Heart left ventricle (tissue), 16 donors: ENCODE measurements at regions of chr5 and their contacts with region 1.

Region 1: GRCh38 chr5:138975098-138975847 is 100.1 kb upstream of the LRRTM2 start:
- DNase-seq: peak; percentile 69 to 73 (median 70)
- ATAC-seq: peak in 3 of 4 donors; percentile 25 to 53 (median 41)
- H3K4me3 ChIP-seq: no peak overlapping the region
- H3K27ac ChIP-seq: peak overlapping the region; percentile 62 to 95 (median 84)
- H3K4me1 ChIP-seq: peaks cover 0 to 54% (median 44%) of the 10 kb centered on the region in 12 donors
- H3K27me3 ChIP-seq: no peaks in the 10 kb centered on the region
- CTCF ChIP-seq: no peak
- POLR2A ChIP-seq: no peak

Region 2: GRCh38 chr5:138890644-138891043 is 84.6 kb before region 1 on chr5:
- intact Hi-C with region 1: no loop called
- DNase-seq: no peak
- ATAC-seq: no peak
- H3K4me3 ChIP-seq: no peak overlapping the region
- H3K27ac ChIP-seq: no peak overlapping the region
- H3K4me1 ChIP-seq: no peaks in the 10 kb centered on the region
- H3K27me3 ChIP-seq: no peaks in the 10 kb centered on the region
- CTCF ChIP-seq: no peak
- POLR2A ChIP-seq: no peak

Region 3: DNA sequence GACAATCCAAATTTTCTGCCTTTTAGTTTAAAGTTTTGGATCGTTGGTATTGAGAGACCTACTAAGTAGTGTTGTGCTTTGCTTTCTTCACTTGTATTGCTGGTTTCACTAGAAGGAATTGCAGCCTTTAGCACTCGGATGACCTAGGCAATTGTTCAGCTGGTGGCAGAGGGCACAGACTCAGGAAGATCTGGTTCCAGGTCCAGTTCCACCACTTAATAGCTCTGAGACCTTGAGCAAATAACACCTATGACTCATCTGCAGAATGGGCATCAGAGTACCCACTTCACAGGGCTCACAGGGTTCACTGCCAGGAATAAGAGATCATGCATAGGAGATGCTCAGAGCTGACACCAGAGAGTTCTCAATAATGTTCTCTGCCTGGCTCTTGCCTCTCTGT is 89.3 kb after region 1 on chr5:
- intact Hi-C with region 1: no loop called
- DNase-seq: no peak
- ATAC-seq: peak in 1 of 4 donors; percentile 28
- H3K4me3 ChIP-seq: no peak overlapping the region
- H3K27ac ChIP-seq: no peak overlapping the region
- H3K4me1 ChIP-seq: peaks cover 0 to 38% (median 14%) of the 10 kb centered on the region in 12 donors
- H3K27me3 ChIP-seq: no peaks in the 10 kb centered on the region
- CTCF ChIP-seq: no peak
- POLR2A ChIP-seq: no peak

Region 4: GRCh38 chr5:139268364-139269202 is 293.3 kb after region 1 on chr5:
- intact Hi-C with region 1: loop called in 1 of 10 experiments (anchors 5 kb)
- DNase-seq: no peak
- ATAC-seq: peak in 2 of 4 donors; percentile 27 to 46
- H3K4me3 ChIP-seq: peak overlapping the region in 1 of 12 donors; percentile 17
- H3K27ac ChIP-seq: peak overlapping the region; percentile 44 to 79 (median 72)
- H3K4me1 ChIP-seq: peaks cover 3 to 52% (median 24%) of the 10 kb centered on the region in 12 donors
- H3K27me3 ChIP-seq: no peaks in the 10 kb centered on the region
- CTCF ChIP-seq: peak in 3 of 12 donors; percentile 29 to 43 (median 42)
- POLR2A ChIP-seq: no peak

Region 5: DNA sequence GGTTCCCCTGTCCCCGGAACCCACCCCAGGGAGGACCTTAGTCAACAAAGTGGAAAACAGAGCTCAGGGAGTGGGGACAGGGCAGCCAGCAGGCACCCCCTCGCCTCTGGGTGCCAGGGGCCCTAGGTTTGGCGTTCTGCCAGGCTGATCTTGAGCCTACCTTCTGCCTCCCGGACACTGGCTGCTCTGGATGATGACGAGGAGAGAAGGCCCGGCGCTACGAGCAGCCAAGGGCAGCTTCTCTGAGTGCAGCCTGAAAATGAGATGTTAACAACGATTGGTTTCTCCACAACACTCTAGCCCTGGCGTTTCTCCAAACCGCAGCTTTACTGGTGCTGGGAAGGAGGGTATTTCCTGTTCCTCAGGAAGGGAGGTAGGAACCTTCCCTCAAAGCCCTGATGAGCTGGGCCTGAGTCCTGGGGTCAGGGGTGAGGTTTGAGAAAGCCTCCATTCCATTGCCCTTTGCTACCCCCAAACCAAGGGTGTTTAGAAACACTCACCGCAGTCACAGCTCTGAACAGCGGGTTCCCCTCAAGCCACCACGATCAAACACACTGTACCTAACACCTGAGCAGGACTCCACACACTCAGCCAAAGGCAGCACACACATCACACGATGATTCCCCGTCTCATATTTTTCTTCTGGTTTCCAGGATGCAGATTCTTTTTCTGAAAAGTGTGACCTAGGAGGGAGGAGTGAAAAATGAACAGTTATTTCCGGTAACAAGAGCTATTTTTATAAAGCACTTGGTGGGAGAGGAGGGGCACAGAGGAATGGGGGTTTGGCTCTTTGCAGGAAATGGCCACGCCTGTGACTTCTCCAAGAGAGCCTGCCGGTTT is 507.0 kb after region 1 on chr5 and contains the start of gene STING1:
- intact Hi-C with region 1: no loop called
- DNase-seq: peak; percentile 84 to 92 (median 86)
- ATAC-seq: peak; percentile 52 to 77 (median 72)
- H3K4me3 ChIP-seq: peak within 1 kb of the TSS; percentile 35 to 81 (median 62)
- H3K27ac ChIP-seq: peak within 1 kb of the TSS; percentile 86 to 98 (median 92)
- H3K4me1 ChIP-seq: peaks cover 0 to 77% (median 43%) of the 10 kb centered on the region in 12 donors
- H3K27me3 ChIP-seq: no peaks in the 10 kb centered on the region
- CTCF ChIP-seq: no peak
- POLR2A ChIP-seq: peak in 1 of 2 donors; percentile 25
- total RNA-seq, gene STING1: 32.4 to 119 (median 57.9) TPM